ENCODE measurements at regions of chr5 and their contacts with region 1.

Region 1: DNA sequence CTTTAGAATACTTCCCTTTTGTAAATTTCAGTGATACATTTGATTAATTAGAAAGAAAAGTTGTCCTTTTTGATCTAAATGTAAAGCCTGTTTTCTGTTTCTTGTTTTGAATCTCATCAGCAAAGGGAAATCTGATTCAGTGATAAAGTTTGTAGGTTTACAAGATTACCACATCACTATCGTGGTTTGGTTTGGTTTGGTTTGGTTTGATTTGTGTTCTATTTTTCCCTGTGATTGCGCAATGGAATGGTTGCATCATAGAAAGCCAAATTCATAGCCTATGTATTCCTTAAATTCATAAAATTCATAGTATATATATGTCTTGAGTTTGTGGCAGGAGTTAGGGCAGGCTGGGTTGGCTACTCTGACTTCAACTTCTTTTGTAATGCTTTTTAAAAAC is 15.2 kb downstream of the SRFBP1 start:
- DNase-seq: no peak
- H3K4me3 Mint-ChIP-seq: no peak overlapping the region
- H3K27ac Mint-ChIP-seq: no peak overlapping the region
- H3K4me1 Mint-ChIP-seq: peaks cover 35% of the 10 kb centered on the region
- H3K27me3 Mint-ChIP-seq: no peaks in the 10 kb centered on the region

Region 2: GRCh38 chr5:121366515-121366914 is 610.5 kb before region 1 on chr5:
- CTCF ChIA-PET with region 1: no interaction called
- POLR2A ChIA-PET with region 1: no interaction called
- intact Hi-C with region 1: no loop called
- DNase-seq: no peak
- H3K4me3 Mint-ChIP-seq: no peak overlapping the region
- H3K27ac Mint-ChIP-seq: no peak overlapping the region
- H3K4me1 Mint-ChIP-seq: no peaks in the 10 kb centered on the region
- H3K27me3 Mint-ChIP-seq: no peaks in the 10 kb centered on the region

Region 3: DNA sequence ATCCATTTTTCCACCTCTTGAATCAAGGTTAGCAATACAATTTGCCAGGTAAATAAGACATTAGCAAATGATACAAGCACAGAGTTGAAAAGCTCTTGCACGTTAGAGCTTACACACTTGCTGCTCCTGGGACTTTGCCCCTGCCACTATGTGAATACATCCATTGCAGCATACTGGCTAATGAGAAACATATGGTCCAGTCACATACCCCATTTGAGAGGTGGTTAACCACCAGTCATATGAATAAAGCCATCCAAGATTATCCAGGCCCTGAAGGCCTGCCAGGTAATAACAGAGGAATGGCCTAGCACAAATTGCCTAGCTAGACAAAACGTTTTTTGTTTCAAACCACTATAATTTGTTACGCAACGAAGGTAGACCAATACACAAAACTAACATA is 171.1 kb before region 1 on chr5:
- CTCF ChIA-PET with region 1: no interaction called
- POLR2A ChIA-PET with region 1: no interaction called
- intact Hi-C with region 1: no loop called
- DNase-seq: no peak
- H3K4me3 Mint-ChIP-seq: no peak overlapping the region
- H3K27ac Mint-ChIP-seq: no peak overlapping the region
- H3K4me1 Mint-ChIP-seq: no peaks in the 10 kb centered on the region
- H3K27me3 Mint-ChIP-seq: no peaks in the 10 kb centered on the region

Region 4: GRCh38 chr5:121987685-121988073 is 10.7 kb after region 1 on chr5:
- CTCF ChIA-PET with region 1: no interaction called
- POLR2A ChIA-PET with region 1: no interaction called
- intact Hi-C with region 1: loop called (anchors 1 kb)
- DNase-seq: no peak
- H3K4me3 Mint-ChIP-seq: no peak overlapping the region
- H3K27ac Mint-ChIP-seq: no peak overlapping the region
- H3K4me1 Mint-ChIP-seq: peaks cover 4% of the 10 kb centered on the region
- H3K27me3 Mint-ChIP-seq: no peaks in the 10 kb centered on the region

Region 5: GRCh38 chr5:122009436-122009835 is 32.5 kb after region 1 on chr5:
- CTCF ChIA-PET with region 1: no interaction called
- POLR2A ChIA-PET with region 1: interaction called, 3 read pairs
- intact Hi-C with region 1: loop called (anchors 2 kb)
- DNase-seq: no peak
- H3K4me3 Mint-ChIP-seq: no peak overlapping the region
- H3K27ac Mint-ChIP-seq: no peak overlapping the region
- H3K4me1 Mint-ChIP-seq: peaks cover 28% of the 10 kb centered on the region
- H3K27me3 Mint-ChIP-seq: no peaks in the 10 kb centered on the region

Region 6: DNA sequence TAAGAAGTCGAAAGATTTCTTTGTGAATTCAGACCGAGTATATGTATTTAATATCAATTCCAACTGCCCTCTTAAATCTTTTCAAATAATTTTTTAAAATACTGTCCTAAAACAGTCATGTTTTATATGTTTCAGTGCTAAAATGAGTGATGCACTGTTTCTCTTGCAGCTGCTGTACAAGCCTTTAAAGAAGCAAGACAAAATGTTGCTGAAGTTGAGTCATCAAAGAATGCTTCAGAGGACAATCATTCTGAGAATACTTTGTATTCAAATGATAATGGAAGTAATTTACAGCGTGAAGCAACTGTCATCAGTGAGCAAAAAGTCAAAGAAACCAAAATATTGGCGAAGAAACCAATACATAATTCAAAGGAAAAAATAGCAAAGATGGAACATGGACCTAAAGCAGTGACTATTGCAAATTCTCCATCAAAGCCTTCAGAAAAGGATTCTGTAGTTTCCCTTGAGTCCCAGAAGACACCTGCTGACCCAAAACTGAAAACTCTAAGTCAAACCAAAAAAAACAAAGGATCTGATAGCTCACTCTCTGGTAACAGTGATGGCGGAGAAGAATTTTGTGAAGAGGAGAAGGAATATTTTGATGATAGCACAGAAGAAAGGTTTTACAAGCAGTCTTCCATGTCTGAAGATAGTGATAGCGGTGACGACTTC is 43.1 kb after region 1 on chr5:
- CTCF ChIA-PET with region 1: no interaction called
- POLR2A ChIA-PET with region 1: no interaction called
- intact Hi-C with region 1: loop called (anchors 2 kb)
- DNase-seq: no peak
- H3K4me3 Mint-ChIP-seq: peak overlapping the region; percentile 13
- H3K27ac Mint-ChIP-seq: peak overlapping the region; percentile 42
- H3K4me1 Mint-ChIP-seq: peaks cover 14% of the 10 kb centered on the region
- H3K27me3 Mint-ChIP-seq: no peaks in the 10 kb centered on the region